SK-N-SH (cell line): ENCODE measurements at regions of chr11 and their contacts with region 1.

Region 1: DNA sequence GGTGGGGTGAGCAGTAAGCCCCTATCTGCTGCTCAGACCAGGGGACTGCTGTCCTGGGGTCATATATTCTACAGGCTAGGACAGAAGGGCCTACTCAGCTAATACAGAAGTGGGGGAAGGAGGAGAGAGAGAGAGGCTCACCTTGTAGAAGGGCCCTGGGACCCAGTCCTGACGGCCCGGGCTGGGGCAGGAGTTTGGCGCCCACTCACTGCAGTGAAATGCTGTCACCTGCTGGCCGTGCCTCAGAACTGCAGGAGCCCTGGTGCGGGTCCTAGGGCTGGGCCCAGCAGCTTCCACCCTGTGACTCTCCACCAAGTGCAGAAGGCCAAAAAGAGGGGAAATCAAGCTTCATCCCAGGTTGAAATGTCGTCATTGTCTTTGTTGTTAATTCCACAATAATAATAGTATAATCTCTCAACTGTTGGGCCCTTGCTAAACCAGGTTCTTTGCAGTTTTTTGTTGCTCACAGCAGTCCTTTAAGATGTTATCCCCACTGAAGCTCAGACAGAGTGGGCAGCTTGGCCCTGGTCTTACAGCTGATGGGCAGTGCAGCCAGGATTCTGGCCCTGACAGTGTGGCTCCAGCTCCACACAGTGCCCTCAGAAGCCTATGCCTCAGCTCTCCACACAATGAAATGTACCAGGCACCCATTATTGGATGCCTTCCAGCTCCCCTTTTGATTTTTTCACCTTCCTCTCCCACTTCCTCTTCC is 29.6 kb downstream of the TRIM29 start:
- DNase-seq: peak; percentile 95
- H3K4me3 ChIP-seq: peak overlapping the region in 1 of 2 experiments; percentile 24; a peak in 1 of 4 replicates
- H3K27ac ChIP-seq: peak overlapping the region in 1 of 2 experiments; percentile 56; a peak in 2 of 4 replicates
- H3K4me1 ChIP-seq: peaks cover 0 to 43% of the 10 kb centered on the region in 2 experiments; a peak in 1 of 4 replicates
- H3K27me3 ChIP-seq: peaks cover 17% of the 10 kb centered on the region; the same call in 1 of the 2 replicates
- CTCF ChIP-seq: peak; percentile 98
- EP300 ChIP-seq: no peak
- RAD21 ChIP-seq: peak; percentile 99

Region 2: GRCh38 chr11:119673759-119674336 is 434.5 kb before region 1 on chr11:
- CTCF ChIA-PET with region 1: interaction called, 76 read pairs
- POLR2A ChIA-PET with region 1: interaction called, 3 read pairs
- DNase-seq: no peak
- H3K4me3 ChIP-seq: no peak overlapping the region
- H3K27ac ChIP-seq: peak overlapping the region in 1 of 2 experiments; percentile 93; a peak in 1 of 4 replicates
- H3K4me1 ChIP-seq: peaks cover 10 to 35% of the 10 kb centered on the region in 2 experiments; a peak in 2 of 4 replicates
- H3K27me3 ChIP-seq: no peaks in the 10 kb centered on the region
- CTCF ChIP-seq: no peak
- EP300 ChIP-seq: no peak
- RAD21 ChIP-seq: 0 out of 2 replicates have a peak, but pooled peaks have one; percentile 15

Region 3: DNA sequence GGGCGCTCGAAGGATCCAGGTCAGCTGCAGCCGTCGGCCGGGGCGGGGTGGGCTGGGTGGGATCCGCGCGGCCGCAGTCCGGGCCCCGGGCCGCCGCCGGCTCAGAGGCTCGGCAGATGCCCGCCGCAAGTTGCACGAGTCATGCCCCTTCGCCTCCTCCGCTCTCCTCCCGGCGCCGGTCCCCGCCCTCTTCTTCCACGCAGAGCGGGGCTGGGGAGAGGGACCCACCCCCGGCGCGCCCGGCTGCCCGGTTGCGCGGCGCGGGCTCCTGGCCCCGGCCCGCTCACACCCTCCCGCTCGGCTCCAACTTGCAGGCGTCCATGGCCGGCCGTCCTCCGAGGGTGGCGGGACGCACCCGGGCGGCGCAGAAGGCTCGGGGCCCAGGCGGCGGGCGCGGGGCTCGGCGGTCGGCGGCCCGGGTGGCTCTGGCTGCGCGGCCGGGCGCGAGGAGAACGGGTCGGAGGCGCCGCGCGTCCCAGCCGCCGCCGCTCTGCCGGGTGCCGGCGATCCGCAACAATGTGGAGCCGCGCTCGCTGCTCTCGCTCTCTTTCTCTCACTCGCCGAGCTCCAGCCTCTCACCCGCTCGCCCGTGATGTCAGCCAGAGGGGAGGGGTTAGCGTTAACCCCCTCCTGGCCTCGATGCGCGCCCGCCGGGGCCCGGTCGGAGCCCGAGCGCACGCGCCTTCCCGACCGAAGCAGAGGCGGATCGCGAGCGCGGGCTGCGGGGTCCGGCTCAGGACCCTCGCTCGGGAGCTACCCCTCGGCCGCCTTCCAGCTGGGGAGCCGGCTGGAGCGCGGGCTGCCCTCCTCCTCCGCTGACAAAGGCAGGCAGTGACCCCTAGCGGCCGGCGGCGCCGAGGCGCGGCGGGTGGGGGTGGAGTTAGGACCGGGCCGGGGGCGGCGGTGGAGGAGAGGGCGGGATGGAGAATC is 379.4 kb before region 1 on chr11 and contains the start of gene NECTIN1:
- CTCF ChIA-PET with region 1: interaction called, 129 read pairs
- POLR2A ChIA-PET with region 1: interaction called, 7 read pairs
- DNase-seq: peak; percentile 96
- H3K4me3 ChIP-seq: peak within 1 kb of the TSS; percentile 84 to 87
- H3K27ac ChIP-seq: peak within 1 kb of the TSS; percentile 74 to 97
- H3K4me1 ChIP-seq: peaks cover 6 to 47% of the 10 kb centered on the region in 2 experiments; a peak in 2 of 4 replicates
- H3K27me3 ChIP-seq: no peaks in the 10 kb centered on the region
- CTCF ChIP-seq: peak; percentile 93
- EP300 ChIP-seq: no peak
- RAD21 ChIP-seq: peak; percentile 78
- polyA plus RNA-seq, gene NECTIN1: 6.7 and 9.1 TPM in 2 replicates

Region 4: DNA sequence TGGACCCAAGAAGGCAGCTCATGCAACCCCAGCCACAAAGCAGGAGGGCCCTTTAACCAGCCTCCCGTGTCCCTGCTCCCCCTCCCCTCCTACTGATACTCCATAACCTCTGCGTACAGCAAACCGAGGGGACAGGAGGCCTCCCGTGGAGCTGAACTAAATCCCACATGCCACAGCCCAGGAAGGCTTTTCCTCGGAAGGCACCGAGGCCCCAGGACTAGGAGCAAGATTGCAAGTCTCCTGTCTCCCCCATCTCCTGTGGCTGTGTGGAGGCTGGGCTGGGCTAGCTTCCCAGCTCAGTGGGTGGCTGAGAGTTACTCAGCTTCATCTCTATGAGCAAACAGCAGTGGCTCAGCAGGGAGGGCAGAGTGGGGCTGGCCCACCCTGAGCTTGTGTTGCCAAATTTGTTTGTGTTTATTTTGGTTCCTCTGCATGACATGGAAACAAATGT is 316.6 kb before region 1 on chr11:
- CTCF ChIA-PET with region 1: interaction called, 17 read pairs
- POLR2A ChIA-PET with region 1: no interaction called
- DNase-seq: no peak
- H3K4me3 ChIP-seq: no peak overlapping the region
- H3K27ac ChIP-seq: peak overlapping the region in 1 of 2 experiments; percentile 12; a peak in 1 of 4 replicates
- H3K4me1 ChIP-seq: peaks cover 0 to 53% of the 10 kb centered on the region in 2 experiments; a peak in 1 of 4 replicates
- H3K27me3 ChIP-seq: no peaks in the 10 kb centered on the region
- CTCF ChIP-seq: no peak
- EP300 ChIP-seq: no peak
- RAD21 ChIP-seq: no peak

Region 5: DNA sequence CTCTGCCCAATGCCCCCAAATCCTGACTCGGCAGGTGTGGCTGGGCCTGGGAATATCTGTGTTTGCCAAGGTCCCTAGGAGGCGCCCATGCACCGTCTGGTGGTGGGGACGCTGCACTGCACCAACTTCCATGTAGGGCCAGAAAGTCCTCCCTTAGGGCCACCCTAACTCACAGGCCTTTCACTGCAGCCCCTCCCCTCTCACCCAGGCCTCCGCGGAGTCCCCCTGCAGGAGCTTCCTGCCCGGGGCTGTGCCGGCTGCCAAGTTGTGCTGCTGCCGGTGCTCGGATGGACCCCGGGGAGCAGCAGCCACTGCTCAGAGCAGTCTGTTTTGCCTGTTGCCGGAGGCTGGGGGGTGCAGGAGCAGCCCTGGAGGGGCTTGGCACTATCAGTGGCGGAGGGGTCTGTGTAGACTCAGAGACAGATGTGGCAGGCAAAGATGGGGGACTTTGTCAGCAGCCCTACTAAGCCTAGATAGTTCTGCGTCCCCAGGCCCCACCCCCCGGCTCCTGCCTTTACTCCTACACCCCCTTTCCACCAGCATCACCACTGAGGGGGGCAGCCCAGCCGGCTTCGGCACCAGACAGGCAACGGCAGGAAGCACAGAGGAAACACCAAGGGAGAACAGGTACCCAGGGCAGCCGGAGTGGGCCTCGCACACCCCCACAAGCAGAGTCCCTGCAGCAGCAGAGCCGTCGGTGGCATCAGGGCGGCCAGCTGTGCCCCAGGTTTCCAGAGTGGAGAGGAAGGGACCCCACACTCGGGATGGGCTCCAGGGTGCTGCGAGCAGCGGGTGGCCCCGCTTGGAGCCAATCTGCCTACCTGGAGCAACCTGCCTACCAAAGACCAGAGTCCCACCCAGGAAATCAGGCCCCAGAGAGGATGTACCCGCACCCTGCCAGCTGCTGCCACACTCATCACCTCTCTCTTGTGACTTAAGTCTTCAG is 94.7 kb before region 1 on chr11:
- CTCF ChIA-PET with region 1: interaction called, 73 read pairs
- POLR2A ChIA-PET with region 1: interaction called, 4 read pairs
- DNase-seq: peak; percentile 78
- H3K4me3 ChIP-seq: peak overlapping the region in 1 of 2 experiments; percentile 21; a peak in 1 of 4 replicates
- H3K27ac ChIP-seq: no peak overlapping the region; a peak in 1 of 4 replicates
- H3K4me1 ChIP-seq: peaks cover 0 to 43% of the 10 kb centered on the region in 2 experiments; a peak in 2 of 4 replicates
- H3K27me3 ChIP-seq: peaks cover 7% of the 10 kb centered on the region; the same call in 1 of the 2 replicates
- CTCF ChIP-seq: peak; percentile 54
- EP300 ChIP-seq: no peak
- RAD21 ChIP-seq: peak; percentile 71

Region 6: DNA sequence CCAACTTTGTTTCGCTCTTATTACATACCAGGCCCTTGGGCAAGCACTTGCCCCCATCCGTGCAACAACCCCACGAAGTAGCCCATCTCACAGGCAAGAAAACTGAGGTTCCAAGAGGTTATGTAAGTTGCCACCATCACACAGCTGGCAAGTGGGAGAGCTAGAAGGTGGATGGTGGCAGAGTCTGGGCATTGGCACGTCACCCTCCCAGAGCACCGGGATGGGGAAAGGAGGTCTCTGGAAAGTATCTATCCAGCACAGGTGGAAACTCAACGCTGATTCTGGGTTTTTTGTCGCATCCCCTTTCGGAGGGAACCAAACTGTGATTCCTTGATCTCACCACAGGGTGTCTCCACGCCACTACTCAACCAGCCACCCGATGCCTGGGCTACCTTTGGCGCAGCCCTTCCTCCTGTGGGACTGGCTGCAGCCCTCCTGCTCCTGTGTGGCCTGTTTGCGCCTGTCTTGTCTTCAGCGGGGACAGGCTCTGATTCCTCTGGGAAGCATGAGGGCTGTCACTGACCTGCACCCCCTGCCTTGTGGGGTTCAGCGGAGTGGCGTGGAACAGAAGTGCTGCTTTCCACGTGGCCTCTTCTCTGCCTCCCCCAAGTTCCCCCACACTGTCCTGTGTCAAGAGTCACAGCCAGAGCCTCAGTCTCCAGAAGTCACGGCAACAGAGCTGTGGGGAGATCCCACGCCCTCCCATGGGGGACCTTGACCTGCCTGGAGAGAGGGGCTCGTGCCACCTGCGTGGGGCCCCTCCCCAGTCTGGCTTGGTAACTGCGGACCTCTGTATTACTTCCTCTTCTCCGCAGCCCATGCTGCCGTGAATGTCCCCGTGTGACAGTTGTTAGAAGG is 64.0 kb after region 1 on chr11:
- CTCF ChIA-PET with region 1: interaction called, 11 read pairs
- POLR2A ChIA-PET with region 1: no interaction called
- DNase-seq: peak; percentile 88
- H3K4me3 ChIP-seq: no peak overlapping the region; a peak in 1 of 4 replicates
- H3K27ac ChIP-seq: no peak overlapping the region
- H3K4me1 ChIP-seq: peaks cover 0 to 15% of the 10 kb centered on the region in 2 experiments; a peak in 1 of 4 replicates
- H3K27me3 ChIP-seq: peaks cover 25% of the 10 kb centered on the region; the same call in 1 of the 2 replicates
- CTCF ChIP-seq: peak; percentile 74
- EP300 ChIP-seq: no peak
- RAD21 ChIP-seq: peak; percentile 100